Ascending aorta (tissue), 2 donors: ENCODE measurements at regions of chr1 and their contacts with region 1.

Region 1: DNA sequence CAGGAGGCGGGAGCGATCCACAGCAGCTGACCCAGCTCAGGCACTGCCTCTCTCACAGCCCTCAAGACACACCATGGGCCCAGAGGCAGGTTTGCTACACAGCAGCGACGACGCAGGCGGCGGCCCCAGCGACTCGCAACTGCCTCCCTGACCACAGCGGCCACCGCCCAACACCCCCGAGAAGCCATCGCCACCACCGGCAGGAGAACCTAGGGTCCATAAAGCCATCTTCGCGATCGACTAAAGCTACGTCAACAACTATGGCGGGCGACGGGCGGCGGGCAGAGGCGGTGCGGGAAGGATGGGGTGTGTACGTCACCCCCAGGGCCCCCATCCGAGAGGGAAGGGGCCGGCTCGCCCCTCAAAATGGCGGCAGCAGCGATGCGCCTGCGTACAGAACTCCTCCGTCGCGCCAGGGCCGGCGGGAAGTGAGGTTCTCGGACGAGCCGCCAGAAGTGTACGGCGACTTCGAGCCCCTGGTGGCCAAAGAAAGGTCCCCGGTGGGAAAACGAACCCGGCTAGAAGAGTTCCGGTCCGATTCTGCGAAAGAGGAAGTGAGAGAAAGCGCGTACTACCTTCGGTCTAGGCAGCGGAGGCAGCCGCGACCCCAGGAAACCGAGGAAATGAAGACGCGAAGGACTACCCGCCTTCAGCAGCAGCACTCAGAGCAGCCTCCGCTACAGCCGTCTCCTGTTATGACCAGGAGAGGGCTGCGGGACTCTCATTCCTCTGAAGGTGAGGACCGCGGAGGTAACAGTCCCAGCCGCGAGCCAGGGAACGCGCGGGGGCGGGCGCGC is at the start of gene TOR1AIP1:
- DNase-seq: peak; percentile 85 to 98
- H3K4me3 ChIP-seq: peak within 1 kb of the TSS; percentile 83 to 93
- H3K27ac ChIP-seq: peak within 1 kb of the TSS; percentile 97 to 100
- H3K4me1 ChIP-seq: peaks cover 4 to 21% of the 10 kb centered on the region in 2 donors
- H3K27me3 ChIP-seq: no peaks in the 10 kb centered on the region
- CTCF ChIP-seq: peak; percentile 24 to 64 (median 43)
- total RNA-seq, gene TOR1AIP1: 46.6 TPM

Region 2: DNA sequence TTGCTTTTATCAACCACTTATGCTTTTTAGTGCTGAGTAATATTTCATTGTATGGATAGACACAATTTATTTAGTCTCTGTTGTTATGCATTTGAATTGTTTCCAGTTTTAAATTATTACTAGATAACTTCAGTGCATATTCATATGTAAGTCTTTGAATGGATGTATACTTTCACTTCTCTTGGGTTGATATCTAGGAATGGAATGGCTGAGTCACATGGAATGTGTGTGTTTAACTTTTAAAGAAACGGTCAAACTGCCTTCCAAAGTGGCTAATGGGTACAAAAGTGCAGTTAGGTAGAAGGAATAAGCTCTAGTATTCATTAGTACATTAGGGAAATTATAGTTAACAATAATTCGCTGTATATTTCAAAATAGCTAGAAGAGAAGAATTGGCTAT is 389.1 kb before region 1 on chr1:
- intact Hi-C with region 1: no loop called
- DNase-seq: no peak
- H3K4me3 ChIP-seq: no peak overlapping the region
- H3K27ac ChIP-seq: no peak overlapping the region
- H3K4me1 ChIP-seq: no peaks in the 10 kb centered on the region
- H3K27me3 ChIP-seq: no peaks in the 10 kb centered on the region
- CTCF ChIP-seq: no peak

Region 3: GRCh38 chr1:179954493-179955297 is 72.3 kb after region 1 on chr1 and contains the start of gene CEP350:
- intact Hi-C with region 1: loop called (anchors 1 kb)
- DNase-seq: peak; percentile 91 to 99
- H3K4me3 ChIP-seq: peak within 1 kb of the TSS; percentile 81 to 94
- H3K27ac ChIP-seq: peak within 1 kb of the TSS; percentile 92 to 98
- H3K4me1 ChIP-seq: peaks cover 0 to 16% of the 10 kb centered on the region in 2 donors
- H3K27me3 ChIP-seq: no peaks in the 10 kb centered on the region
- CTCF ChIP-seq: no peak
- total RNA-seq, gene CEP350: 37.8 TPM

Region 4: GRCh38 chr1:179968994-179969919 is 86.8 kb after region 1 on chr1:
- intact Hi-C with region 1: loop called (anchors 1 kb)
- DNase-seq: no peak
- H3K4me3 ChIP-seq: peak overlapping the region; percentile 17 to 19
- H3K27ac ChIP-seq: peak overlapping the region; percentile 78 to 85
- H3K4me1 ChIP-seq: peaks cover 9 to 36% of the 10 kb centered on the region in 2 donors
- H3K27me3 ChIP-seq: no peaks in the 10 kb centered on the region
- CTCF ChIP-seq: no peak

Region 5: DNA sequence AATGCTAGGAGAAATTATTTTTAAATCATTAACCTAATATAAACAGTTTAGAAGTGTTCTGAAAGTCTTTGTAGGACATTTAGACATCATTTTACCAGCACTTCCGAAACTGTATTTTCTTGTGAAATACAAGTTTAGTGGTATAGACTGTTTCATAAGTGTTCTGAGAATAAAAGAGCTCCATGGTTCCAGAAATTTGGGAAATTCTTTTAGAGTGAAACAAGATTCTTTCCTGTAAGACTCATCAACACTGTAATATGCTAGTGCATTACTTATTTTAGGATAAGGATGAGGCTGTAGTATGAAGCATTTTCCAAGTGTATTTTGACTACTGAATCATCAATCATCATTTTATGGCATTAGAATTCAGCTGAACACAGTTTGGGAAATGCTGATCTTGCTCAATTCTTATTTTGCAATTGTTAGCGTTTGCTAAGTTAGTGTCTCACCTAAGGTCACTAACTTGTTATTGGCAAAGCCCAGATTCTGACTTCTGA is 145.6 kb after region 1 on chr1:
- intact Hi-C with region 1: loop called (anchors 10 kb)
- DNase-seq: no peak
- H3K4me3 ChIP-seq: no peak overlapping the region
- H3K27ac ChIP-seq: no peak overlapping the region
- H3K4me1 ChIP-seq: no peaks in the 10 kb centered on the region
- H3K27me3 ChIP-seq: no peaks in the 10 kb centered on the region
- CTCF ChIP-seq: no peak

Region 6: DNA sequence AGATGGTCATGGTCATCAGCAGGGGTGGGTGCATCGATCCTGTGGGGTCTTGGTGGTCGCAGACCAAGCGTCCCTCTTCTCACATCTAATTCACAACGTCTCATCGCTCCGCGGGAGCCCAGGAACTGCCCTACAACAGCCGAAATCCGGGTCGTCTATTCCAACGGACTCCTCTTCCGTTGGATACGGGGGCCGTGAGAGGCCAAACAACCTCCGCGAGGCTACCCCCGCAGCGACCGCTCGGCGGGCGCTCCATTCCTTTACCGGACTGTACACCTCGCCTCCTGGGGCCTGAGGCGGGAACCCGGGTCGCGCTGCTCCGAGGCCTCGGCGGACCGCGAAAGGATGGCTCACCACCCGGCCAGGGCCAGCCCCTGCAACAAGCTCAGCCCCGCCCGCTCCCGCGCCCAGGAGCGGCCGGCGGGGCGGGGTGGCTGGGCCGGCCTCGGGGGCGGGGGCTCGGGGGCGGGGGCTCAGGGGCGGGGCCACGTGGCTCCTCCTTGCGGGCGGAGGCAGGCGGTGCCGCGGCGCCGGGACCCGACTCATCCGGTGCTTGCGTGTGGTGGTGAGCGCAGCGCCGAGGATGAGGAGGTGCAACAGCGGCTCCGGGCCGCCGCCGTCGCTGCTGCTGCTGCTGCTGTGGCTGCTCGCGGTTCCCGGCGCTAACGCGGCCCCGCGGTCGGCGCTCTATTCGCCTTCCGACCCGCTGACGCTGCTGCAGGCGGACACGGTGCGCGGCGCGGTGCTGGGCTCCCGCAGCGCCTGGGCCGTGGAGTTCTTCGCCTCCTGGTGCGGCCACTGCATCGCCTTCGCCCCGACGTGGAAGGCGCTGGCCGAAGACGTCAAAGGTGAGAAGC is 272.1 kb after region 1 on chr1 and contains the start of gene QSOX1:
- intact Hi-C with region 1: loop called (anchors 2 kb)
- DNase-seq: peak; percentile 59 to 93
- H3K4me3 ChIP-seq: peak within 1 kb of the TSS; percentile 82 to 85
- H3K27ac ChIP-seq: peak within 1 kb of the TSS; percentile 82 to 85
- H3K4me1 ChIP-seq: peaks cover 4 to 17% of the 10 kb centered on the region in 2 donors
- H3K27me3 ChIP-seq: no peaks in the 10 kb centered on the region
- CTCF ChIP-seq: peak in 2 of 3 experiments; percentile 12 to 37
- total RNA-seq, gene QSOX1: 200 TPM